Lower leg skin (tissue), 4 donors: ENCODE measurements at regions of chr6 and their contacts with region 1.

Region 1: DNA sequence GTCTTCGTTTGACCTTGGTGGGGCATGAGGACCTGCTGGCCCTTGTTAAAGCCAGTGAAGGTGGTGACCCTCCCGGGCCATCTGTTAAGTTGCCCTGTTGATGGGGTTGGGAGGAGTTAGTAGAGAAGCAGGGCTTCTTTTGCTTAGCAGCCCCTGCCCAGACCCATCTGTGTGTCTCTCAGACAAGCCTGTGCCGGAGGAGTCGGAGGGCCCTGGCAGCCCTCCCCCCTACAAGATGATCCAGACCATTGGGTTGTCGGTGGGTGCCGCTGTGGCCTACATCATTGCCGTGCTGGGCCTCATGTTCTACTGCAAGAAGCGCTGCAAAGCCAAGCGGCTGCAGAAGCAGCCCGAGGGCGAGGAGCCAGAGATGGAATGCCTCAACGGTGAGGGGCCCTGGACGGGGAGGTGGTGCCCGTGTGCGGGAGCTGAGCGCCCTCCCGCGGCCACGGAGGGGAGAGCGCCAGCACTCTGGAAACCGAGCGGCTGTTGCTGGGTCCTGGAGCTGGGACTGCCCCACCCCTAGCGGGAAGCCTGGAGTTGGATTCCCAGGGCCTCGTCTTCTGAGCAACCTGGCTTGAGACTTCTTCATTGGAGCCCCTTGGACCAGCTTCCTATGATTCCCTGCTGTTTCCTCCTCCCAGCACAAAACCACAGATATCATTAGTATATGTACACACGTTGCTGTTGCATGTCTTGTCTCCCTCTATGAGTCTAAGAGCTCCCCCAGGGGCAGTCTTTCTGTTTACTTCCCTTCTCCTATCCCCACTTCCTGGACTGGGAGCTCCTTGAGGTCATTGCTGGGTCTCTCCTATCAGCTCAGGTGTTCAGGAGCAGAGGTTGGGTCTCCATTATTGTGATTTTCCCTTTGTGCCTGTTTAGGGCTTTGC is 27.6 kb upstream of the SRF start:
- DNase-seq: peak; percentile 74 to 96
- H3K4me3 ChIP-seq: no peak overlapping the region
- CTCF ChIP-seq: peak in 1 of 3 donors; percentile 80
- POLR2A ChIP-seq: no peak

Region 2: DNA sequence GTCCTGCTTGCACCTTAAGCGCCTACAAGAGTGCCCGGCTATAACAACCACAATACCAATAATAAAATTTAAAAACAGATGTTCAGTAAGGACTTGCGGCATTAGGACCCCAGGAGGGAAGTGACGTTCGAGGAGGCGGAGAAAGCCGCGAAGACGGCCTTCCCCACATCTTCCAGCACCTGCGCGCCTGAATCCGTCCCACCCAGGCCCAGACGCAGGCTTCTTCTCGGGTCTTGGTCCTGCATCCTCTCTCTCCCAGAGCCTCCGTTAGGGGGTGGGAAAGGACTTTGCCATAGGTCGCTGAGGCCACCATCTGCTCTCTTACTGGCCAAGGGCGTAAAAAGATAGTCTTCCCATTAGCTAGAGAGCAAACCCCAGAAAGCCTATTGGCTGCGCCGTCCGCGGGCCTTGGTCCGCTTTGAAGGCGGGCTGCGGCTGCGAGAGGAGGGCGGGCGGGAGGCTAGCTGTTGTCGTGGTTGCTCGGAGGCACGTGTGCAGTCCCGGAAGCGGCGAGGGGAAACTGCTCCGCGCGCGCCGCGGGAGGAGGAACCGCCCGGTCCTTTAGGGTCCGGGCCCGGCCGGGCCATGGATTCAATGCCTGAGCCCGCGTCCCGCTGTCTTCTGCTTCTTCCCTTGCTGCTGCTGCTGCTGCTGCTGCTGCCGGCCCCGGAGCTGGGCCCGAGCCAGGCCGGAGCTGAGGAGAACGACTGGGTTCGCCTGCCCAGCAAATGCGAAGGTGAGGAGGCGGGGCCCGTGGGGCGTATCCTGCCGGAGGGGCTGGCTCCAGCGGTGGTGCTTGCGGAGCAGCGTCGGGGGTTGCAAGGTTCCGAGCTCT is 214.3 kb before region 1 on chr6 and contains the start of gene CNPY3:
- intact Hi-C with region 1: loop called (anchors 10 kb)
- DNase-seq: peak; percentile 93 to 98
- H3K4me3 ChIP-seq: peak within 1 kb of the TSS; percentile 64
- CTCF ChIP-seq: no peak
- POLR2A ChIP-seq: peak in 1 of 2 donors; percentile 1
- total RNA-seq, gene CNPY3: 15.6 to 28.9 (median 19.7) TPM